ENCODE measurements at regions of chr1 and their contacts with region 1.

Region 1: DNA sequence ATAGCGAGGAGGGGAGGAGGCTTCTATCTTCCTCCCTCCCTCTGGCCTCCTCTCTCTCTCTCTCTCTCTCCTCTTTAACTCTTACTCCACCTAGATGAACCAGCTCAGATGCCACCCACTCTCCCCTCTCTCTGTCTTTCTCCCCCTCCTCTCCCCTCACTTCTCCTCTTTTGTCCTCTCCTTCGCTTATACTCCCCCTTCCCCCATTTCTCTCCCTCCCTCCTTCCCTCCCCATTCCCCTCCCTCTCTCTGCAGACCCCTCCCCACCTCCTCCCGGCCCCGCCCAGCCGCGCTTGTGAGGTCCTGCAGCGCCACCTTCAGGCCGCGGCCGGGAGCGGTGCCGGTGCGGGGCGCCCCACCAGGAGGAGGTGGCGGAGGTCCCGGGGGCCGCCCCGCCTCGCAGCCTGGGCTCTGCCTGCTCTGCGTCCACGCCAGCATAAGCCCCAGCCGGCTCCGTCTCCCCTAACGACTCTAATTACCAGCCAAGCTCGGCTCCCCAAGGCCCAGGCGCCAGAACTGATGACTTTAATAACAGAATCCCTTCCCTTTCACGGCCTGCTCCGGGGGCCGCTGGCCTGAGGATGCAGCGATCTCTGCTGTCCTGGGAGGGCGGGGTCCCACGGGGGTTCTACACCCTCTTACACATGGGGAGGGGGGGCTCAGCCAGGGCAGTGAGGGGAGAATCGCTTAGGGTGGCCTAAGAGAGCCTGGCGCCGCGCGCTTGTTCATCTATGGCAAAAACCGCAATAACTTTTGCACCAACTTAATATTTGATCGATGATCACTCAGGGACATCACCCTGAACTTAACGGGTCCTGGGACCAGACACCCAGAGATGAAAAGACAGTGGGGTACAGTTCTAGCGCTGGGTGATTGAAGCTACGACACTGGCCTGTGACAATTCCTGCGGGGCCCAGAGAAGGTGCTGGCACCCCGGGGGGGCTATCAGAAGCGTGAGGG is 637.3 kb downstream of the MATN1 start:
- DNase-seq: peak; percentile 15
- H3K4me3 Mint-ChIP-seq: no peak overlapping the region
- H3K27ac Mint-ChIP-seq: peak overlapping the region; percentile 50
- H3K4me1 Mint-ChIP-seq: peaks cover 17% of the 10 kb centered on the region
- H3K27me3 Mint-ChIP-seq: no peaks in the 10 kb centered on the region
- CTCF ChIP-seq: peak; percentile 80

Region 2: GRCh38 chr1:29230553-29231378 is 855.3 kb before region 1 on chr1 and contains the start of gene MECR:
- CTCF ChIA-PET with region 1: no interaction called
- POLR2A ChIA-PET with region 1: no interaction called
- intact Hi-C with region 1: loop called (anchors 10 kb)
- DNase-seq: peak; percentile 90
- H3K4me3 Mint-ChIP-seq: peak within 1 kb of the TSS; percentile 90
- H3K27ac Mint-ChIP-seq: peak within 1 kb of the TSS; percentile 96
- H3K4me1 Mint-ChIP-seq: peaks cover 11% of the 10 kb centered on the region
- H3K27me3 Mint-ChIP-seq: peaks cover 14% of the 10 kb centered on the region
- CTCF ChIP-seq: peak; percentile 11
- total RNA-seq, gene MECR: 46.2 and 59.1 TPM in 2 replicates

Region 3: DNA sequence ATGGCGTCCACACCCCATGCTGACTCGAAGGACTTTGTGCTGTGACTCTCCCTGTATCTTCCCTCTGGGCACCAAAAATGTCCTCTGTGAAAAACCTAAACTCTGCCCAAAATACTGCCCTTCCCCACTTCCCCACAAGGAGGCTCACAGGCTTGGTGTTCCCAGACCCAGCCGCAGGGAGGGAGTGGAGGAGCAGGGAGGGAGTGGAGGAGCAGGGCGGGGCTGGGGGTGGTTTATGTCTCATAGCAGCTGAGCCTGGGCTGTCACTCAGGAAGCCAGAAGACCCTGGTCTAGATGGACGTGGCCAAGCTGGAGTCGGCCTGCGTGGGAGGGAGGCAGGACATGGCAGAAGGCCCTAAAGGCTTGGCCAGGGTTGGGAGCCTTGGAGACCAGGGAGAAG is 388.1 kb before region 1 on chr1:
- CTCF ChIA-PET with region 1: no interaction called
- POLR2A ChIA-PET with region 1: no interaction called
- intact Hi-C with region 1: loop called (anchors 2 kb)
- DNase-seq: peak; percentile 80
- H3K4me3 Mint-ChIP-seq: no peak overlapping the region
- H3K27ac Mint-ChIP-seq: no peak overlapping the region
- H3K4me1 Mint-ChIP-seq: peaks cover 8% of the 10 kb centered on the region
- H3K27me3 Mint-ChIP-seq: peaks cover 15% of the 10 kb centered on the region
- CTCF ChIP-seq: peak; percentile 36

Region 4: GRCh38 chr1:29708901-29709710 is 377.0 kb before region 1 on chr1:
- CTCF ChIA-PET with region 1: interaction called, 3 read pairs
- POLR2A ChIA-PET with region 1: no interaction called
- intact Hi-C with region 1: loop called (anchors 2 kb)
- DNase-seq: peak; percentile 91
- H3K4me3 Mint-ChIP-seq: peak overlapping the region; percentile 4
- H3K27ac Mint-ChIP-seq: peak overlapping the region; percentile 88
- H3K4me1 Mint-ChIP-seq: peaks cover 51% of the 10 kb centered on the region
- H3K27me3 Mint-ChIP-seq: no peaks in the 10 kb centered on the region
- CTCF ChIP-seq: no peak

Region 5: GRCh38 chr1:29912425-29912824 is 173.7 kb before region 1 on chr1:
- CTCF ChIA-PET with region 1: interaction called, 4 read pairs
- POLR2A ChIA-PET with region 1: no interaction called
- intact Hi-C with region 1: loop called (anchors 1 kb)
- DNase-seq: peak; percentile 53
- H3K4me3 Mint-ChIP-seq: no peak overlapping the region
- H3K27ac Mint-ChIP-seq: no peak overlapping the region
- H3K4me1 Mint-ChIP-seq: no peaks in the 10 kb centered on the region
- H3K27me3 Mint-ChIP-seq: peaks cover 38% of the 10 kb centered on the region
- CTCF ChIP-seq: peak; percentile 36